Body of pancreas (tissue), 4 donors: ENCODE measurements at regions of chr4 and their contacts with region 1.

Region 1: DNA sequence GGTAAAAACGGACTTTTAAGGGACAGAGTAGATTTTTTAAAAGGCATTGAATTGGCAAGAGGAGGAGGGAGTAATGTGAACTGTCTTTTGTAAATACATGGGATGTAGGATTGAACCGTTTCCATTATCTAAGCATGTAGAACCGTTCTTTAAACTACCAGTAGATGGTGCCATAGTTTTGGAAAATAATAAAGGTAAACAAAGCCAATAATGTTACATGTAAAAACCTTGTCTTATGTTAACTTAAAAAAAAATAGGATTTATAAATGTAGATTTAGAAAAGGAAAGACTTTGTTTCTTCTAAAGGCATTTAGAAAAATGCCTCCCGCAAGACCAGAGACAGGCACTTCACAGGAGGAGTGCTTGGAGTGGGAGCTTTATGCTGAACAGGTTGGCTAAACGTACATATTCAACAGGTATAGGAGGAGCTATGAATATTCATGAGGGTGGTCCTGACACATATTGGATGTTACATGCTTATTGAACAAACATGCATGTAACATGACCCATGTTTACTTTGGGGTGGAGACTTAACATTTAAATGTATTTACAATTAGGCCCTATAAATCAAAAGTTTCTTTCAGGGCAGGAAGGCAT is 45.5 kb upstream of the FAM241A start:
- DNase-seq: no peak
- ATAC-seq: peak; percentile 70
- H3K4me3 ChIP-seq: no peak overlapping the region
- H3K27ac ChIP-seq: no peak overlapping the region
- H3K4me1 ChIP-seq: no peaks in the 10 kb centered on the region
- H3K27me3 ChIP-seq: no peaks in the 10 kb centered on the region
- CTCF ChIP-seq: peak; percentile 33 to 81 (median 73)
- POLR2A ChIP-seq: no peak

Region 2: GRCh38 chr4:111678479-111678878 is 421.3 kb before region 1 on chr4:
- intact Hi-C with region 1: no loop called
- DNase-seq: no peak
- ATAC-seq: no peak
- H3K4me3 ChIP-seq: no peak overlapping the region
- H3K27ac ChIP-seq: no peak overlapping the region
- H3K4me1 ChIP-seq: no peaks in the 10 kb centered on the region
- H3K27me3 ChIP-seq: no peaks in the 10 kb centered on the region
- CTCF ChIP-seq: no peak
- POLR2A ChIP-seq: no peak

Region 3: DNA sequence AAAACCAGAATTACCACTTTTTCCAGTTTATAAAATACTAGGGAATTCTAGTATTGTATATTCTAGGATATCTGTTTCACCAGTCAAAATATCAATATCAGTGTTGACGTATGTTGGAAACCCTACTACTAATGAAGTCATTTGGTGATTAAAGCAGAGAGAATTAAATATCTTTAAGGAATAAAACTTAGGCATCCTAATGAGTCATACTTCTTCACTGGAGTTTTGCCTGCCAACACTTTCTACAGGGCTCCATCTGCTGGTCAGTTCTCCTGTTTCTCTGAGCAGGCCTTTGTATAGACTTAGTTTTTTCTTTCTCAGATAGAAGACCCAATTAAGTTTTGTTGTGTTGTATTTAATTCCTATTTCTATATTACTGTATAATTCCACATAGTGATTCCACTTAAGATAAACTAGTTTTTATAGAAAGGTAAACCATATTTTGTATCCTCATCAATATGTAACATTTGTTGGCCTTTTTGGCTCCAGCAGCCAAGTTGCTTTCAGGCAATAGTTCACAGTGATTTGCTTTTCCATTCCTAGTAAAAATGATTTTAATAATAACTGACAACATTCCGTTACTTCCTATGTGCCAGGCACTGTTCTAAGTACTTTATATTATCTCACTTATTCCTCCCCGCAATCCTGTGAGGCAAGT is 135.3 kb after region 1 on chr4:
- intact Hi-C with region 1: loop called (anchors 5 kb)
- DNase-seq: peak; percentile 71 to 83 (median 76)
- ATAC-seq: no peak
- H3K4me3 ChIP-seq: no peak overlapping the region
- H3K27ac ChIP-seq: no peak overlapping the region
- H3K4me1 ChIP-seq: peaks cover 17% of the 10 kb centered on the region
- H3K27me3 ChIP-seq: no peaks in the 10 kb centered on the region
- CTCF ChIP-seq: peak; percentile 48 to 84 (median 73)
- POLR2A ChIP-seq: no peak

Region 4: GRCh38 chr4:112604589-112604988 is 504.8 kb after region 1 on chr4:
- intact Hi-C with region 1: loop called (anchors 10 kb)
- DNase-seq: peak; percentile 31 to 58 (median 47)
- ATAC-seq: peak; percentile 65
- H3K4me3 ChIP-seq: no peak overlapping the region
- H3K27ac ChIP-seq: no peak overlapping the region
- H3K4me1 ChIP-seq: no peaks in the 10 kb centered on the region
- H3K27me3 ChIP-seq: no peaks in the 10 kb centered on the region
- CTCF ChIP-seq: peak in 6 of 7 experiments; percentile 43 to 65 (median 50)
- POLR2A ChIP-seq: no peak